RWPE1 (cell line): ENCODE measurements at regions of chr12 and their contacts with region 1.

Region 1: GRCh38 chr12:55817346-55818139 is at the starts of genes ORMDL2 and SARNP:
- DNase-seq: peak; percentile 99
- H3K27ac ChIP-seq: peak within 1 kb of the TSS; percentile 83
- CTCF ChIP-seq: no peak

Region 2: DNA sequence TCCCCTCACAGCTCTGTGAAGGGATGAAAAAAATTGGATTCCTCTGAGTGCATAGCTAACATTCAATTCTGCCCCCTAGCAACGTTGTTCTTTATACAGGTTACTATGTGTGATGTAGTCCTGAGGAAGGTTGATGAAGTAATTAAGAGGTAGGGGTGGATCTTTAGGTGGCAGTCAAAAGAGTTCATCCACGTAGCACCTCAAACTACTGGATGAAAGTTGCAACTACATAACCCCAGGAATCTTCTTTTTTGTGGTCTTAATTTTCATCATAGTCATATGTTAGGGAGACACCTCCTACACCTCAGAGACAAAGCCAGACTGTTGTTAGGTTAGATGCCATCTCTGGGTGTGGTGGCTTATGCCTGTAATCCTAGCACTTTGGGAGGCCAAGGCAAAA is 1506.5 kb before region 1 on chr12:
- CTCF ChIA-PET with region 1: no interaction called
- POLR2A ChIA-PET with region 1: interaction called, 12 read pairs
- DNase-seq: no peak
- H3K27ac ChIP-seq: no peak overlapping the region
- CTCF ChIP-seq: no peak

Region 3: DNA sequence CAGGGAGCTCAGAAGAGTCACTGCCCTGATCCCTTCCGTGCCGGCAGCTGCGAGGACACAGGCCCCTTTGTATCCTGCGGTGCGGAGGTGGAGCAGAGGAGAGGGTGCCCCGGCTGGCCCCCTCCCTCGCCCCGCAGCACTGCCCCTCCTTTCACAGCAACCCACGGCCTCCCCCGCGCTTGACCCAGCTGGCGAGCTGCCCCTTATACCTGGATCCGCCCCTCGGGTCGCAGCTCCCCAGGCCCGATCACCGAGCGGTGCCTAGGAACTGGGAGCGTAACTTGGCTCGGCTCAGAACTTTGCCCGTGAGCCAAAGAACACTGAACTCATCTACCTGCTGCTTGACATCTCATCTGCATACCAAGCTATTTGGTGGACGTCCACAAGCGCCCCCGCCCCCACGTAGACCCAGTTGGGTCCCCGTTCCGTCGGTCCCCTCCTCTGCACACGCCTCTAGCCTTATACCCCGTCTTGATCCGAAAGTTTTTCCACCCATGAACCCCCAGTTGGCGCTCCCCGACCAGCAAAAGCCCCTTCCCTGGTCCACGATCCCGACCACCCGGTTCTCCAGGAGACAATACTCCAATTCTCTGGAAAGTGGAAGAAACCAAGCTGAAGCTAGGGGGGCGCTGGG is 12.5 kb after region 1 on chr12:
- CTCF ChIA-PET with region 1: no interaction called
- POLR2A ChIA-PET with region 1: interaction called, 12 read pairs
- DNase-seq: peak; percentile 30
- H3K27ac ChIP-seq: peak overlapping the region; percentile 96
- CTCF ChIP-seq: no peak